ENCODE measurements at regions of chrX and their contacts with region 1.

Region 1: DNA sequence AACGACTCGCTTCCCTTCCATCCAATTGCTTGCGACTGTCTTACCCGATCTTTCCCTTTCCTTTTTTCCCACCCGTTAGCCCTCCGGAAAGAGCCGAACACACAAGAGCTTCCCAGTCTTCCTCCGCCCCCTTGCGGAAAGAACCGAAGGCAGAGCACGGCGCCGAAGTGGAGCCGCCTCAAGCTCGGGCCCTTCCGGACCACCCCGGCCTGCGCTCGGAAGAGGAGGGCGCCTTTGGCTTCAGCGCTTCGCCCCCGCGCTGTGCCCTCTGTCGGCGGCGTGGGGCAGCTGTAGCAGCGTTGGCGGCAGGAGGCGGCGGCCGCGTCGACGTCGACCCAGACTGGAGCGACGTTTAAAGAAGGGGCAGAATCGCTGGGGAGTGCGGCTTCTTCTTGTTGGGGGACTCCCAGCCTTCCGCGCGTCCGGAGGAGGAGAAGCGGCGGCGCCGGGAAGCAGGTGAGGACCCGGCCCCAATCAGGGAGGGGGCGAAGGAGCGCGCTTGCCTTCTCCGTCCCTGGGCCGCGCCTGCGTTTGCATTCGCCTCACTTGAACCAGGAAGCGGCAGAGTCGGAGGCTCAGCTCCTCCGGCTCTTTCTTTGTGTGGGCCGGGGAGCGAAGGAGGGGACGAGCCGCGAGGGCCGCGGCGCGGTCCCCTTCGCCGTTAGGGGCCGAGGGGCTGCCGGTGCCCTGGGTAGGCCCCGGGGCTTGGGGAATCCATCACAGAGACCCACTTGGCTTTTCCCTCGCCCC is at the start of gene ZBTB33:
- DNase-seq: peak; percentile 91 to 94 (median 93)
- ATAC-seq: peak; percentile 99 to 100 (median 99)
- H3K4me3 ChIP-seq: peak within 1 kb of the TSS; percentile 50 to 95 (median 72)
- H3K27ac ChIP-seq: peak within 1 kb of the TSS; percentile 55 to 94 (median 88)
- H3K4me1 ChIP-seq: peaks cover 0 to 14% (median 0%) of the 10 kb centered on the region in 12 donors
- H3K27me3 ChIP-seq: peaks cover 0 to 3% (median 0%) of the 10 kb centered on the region in 9 donors
- CTCF ChIP-seq: peak; percentile 44 to 80 (median 62)
- POLR2A ChIP-seq: peak in 1 of 2 donors; percentile 8
- total RNA-seq, gene ZBTB33: 5.3 to 8.9 (median 7.1) TPM

Region 2: GRCh38 chrX:120302434-120302833 is 51.7 kb after region 1 on chrX:
- intact Hi-C with region 1: loop called in 5 of 10 experiments (anchors 5 to 10 kb)
- DNase-seq: no peak
- ATAC-seq: no peak
- H3K4me3 ChIP-seq: no peak overlapping the region
- H3K27ac ChIP-seq: no peak overlapping the region
- H3K4me1 ChIP-seq: peaks cover 0 to 12% (median 0%) of the 10 kb centered on the region in 12 donors
- H3K27me3 ChIP-seq: peaks cover 0 to 22% (median 0%) of the 10 kb centered on the region in 9 donors
- CTCF ChIP-seq: no peak
- POLR2A ChIP-seq: no peak

Region 3: DNA sequence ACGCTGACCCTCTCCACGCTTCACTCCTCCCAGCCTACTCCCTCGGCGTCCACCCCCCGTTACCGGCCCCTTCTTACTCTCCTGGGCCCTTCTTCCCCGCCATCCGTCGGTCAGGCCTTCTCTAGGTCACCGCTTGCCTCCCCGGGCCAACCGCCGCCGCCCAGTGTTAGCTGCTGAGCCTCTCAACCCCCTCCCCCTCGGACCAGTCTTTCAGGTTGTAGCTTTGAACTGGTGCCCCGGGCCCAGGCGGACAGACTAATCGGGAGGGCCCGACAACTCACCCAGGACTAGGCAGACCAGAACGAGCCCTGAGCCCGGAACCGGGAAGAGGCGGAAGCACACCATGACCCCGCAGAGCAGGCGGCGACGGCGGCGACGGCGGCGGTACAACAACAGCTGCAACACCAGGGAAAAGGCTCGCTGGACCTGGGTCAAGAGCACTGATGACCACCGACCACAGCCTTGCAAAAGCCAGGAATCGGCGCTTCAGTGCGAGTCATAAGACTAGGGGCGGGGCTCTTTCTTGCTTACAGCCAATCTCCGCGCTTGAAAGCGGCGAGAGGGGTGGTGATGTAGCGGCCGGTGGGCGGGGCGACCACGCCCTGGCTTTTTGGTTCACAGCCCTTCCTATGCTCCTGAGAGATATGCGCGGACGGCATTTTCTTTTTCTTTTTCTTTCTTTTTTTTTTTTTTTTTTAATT is 218.3 kb after region 1 on chrX and contains the start of gene LAMP2:
- intact Hi-C with region 1: loop called in 3 of 10 experiments (anchors 5 to 10 kb)
- DNase-seq: peak; percentile 87 to 92 (median 88)
- ATAC-seq: peak; percentile 97 to 98 (median 98)
- H3K4me3 ChIP-seq: peak within 1 kb of the TSS; percentile 4 to 96 (median 70)
- H3K27ac ChIP-seq: peak within 1 kb of the TSS; percentile 68 to 92 (median 88)
- H3K4me1 ChIP-seq: peaks cover 0 to 35% (median 8%) of the 10 kb centered on the region in 12 donors
- H3K27me3 ChIP-seq: no peaks in the 10 kb centered on the region
- CTCF ChIP-seq: no peak
- POLR2A ChIP-seq: peak in 1 of 2 donors; percentile 73
- total RNA-seq, gene LAMP2: 58.7 to 111 (median 68.2) TPM

Region 4: DNA sequence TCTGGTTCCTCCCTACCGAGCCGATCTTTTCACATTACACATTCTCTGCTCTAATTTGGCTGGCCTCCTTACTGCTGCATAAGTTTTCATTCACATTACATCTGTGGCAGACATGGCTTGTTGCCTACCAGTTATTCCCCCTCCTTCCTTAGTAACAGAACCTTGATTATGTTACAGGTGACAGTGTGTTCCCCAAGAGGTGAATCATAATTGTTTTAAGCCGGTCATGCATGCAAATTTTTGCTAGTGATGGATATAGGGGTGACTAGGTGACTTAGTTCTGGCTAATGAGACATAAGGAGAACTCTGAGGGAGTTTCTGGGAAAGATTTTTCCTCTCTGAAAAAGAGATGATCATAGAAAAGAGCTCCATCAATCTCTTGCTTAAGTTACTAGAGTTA is 226.8 kb after region 1 on chrX:
- intact Hi-C with region 1: loop called in 2 of 10 experiments (anchors 5 to 10 kb)
- DNase-seq: no peak
- ATAC-seq: no peak
- H3K4me3 ChIP-seq: no peak overlapping the region
- H3K27ac ChIP-seq: no peak overlapping the region
- H3K4me1 ChIP-seq: no peaks in the 10 kb centered on the region
- H3K27me3 ChIP-seq: peaks cover 0 to 10% (median 0%) of the 10 kb centered on the region in 9 donors
- CTCF ChIP-seq: no peak
- POLR2A ChIP-seq: no peak

Measured in heart left ventricle (tissue), 16 donors.